PC-9 (cell line): ENCODE measurements at regions of chr2 and their contacts with region 1.

Region 1: DNA sequence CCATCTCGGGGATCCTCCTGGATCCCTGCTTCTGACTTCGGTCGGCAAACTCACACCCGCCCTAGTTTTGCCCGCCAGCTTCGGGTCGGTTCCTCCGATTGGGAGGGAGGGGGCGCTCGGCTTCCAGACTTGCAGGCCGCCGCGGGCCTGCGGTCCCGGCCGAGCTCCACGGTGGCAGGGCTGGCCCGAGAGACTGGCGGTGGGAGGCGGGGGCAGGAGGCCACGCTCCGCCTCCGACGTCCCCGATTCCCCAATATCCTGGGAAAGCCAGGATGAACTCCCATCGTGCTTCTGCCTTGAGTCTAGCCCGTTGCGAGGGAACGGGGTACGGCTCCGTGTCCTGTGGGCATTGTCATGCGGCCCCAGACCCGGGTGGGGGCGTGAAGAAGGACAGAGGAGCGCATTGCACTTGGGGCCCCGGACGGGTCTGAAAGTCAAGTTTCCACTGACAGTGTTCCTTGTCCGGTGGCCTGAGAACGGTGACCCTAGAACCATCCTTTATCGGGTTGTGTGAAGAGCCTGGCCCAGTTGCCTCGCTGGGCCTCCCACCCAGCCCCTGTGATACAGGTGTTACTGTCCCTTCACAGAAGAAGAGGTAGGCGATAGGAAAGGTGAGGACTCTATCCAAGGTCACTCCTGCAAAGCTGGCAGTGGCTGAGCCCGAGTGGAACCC is 2.4 kb upstream of the INHBB start:
- DNase-seq: peak; percentile 80 to 87
- H3K4me3 ChIP-seq: peak overlapping the region; percentile 77; the same call in 1 of the 2 replicates
- H3K27ac ChIP-seq: no peak overlapping the region
- H3K4me1 ChIP-seq: peaks cover 21% of the 10 kb centered on the region
- H3K27me3 ChIP-seq: 0 out of 2 replicates have a peak, but pooled peaks cover 7% of the 10 kb centered on the region
- CTCF ChIP-seq: peak; percentile 96

Region 2: GRCh38 chr2:120323214-120323613 is 20.4 kb before region 1 on chr2:
- CTCF ChIA-PET with region 1: interaction called, 3 read pairs
- POLR2A ChIA-PET with region 1: interaction called, 26 read pairs
- intact Hi-C with region 1: no loop called
- DNase-seq: peak in 1 of 2 experiments; percentile 62
- H3K4me3 ChIP-seq: no peak overlapping the region
- H3K27ac ChIP-seq: no peak overlapping the region
- H3K4me1 ChIP-seq: peaks cover 47% of the 10 kb centered on the region
- H3K27me3 ChIP-seq: peaks cover 14% of the 10 kb centered on the region
- CTCF ChIP-seq: no peak

Region 3: DNA sequence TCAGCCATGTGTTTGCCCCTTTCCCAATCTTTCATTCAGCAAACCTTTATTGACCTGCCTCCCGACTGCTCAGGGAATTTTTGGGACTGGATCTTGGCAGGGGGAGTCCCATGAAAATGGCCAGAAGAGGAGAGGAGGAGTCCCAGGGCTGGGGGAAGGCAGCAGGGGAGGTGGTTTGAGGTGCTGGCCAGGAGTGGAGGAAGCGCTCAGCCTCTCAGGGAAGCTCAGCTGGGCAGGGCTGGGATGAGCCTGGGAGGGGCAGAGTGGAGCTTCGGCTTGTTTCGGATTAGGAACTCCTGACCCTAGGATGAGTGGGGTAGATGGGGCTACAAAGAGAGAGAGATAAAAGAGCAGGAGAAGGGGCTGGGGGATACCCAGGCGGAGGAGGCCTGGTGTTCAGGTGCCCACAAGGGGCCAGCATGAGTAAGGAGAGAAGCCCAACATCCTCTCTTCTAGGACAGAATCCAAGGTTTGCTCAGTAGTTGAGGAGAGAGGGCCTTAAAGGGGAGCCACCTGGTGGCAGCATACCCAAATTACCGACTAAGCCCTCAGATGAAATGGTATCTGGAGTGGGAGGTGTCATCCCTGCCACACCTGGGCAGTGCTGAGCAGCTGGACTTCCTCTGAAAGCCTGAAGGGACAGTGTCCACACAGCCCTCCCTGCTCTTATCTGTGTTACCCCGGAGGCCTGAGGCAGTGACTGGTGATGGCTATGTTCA is 93.5 kb after region 1 on chr2:
- CTCF ChIA-PET with region 1: interaction called, 3 read pairs
- POLR2A ChIA-PET with region 1: no interaction called
- intact Hi-C with region 1: loop called (anchors 1 kb)
- DNase-seq: peak; percentile 56 to 77
- H3K4me3 ChIP-seq: no peak overlapping the region
- H3K27ac ChIP-seq: no peak overlapping the region
- H3K4me1 ChIP-seq: peaks cover 22% of the 10 kb centered on the region
- H3K27me3 ChIP-seq: no peaks in the 10 kb centered on the region
- CTCF ChIP-seq: peak; percentile 84

Region 4: GRCh38 chr2:120520929-120521912 is 177.7 kb after region 1 on chr2:
- CTCF ChIA-PET with region 1: no interaction called
- POLR2A ChIA-PET with region 1: no interaction called
- intact Hi-C with region 1: loop called (anchors 1 kb)
- DNase-seq: peak; percentile 59 to 74
- H3K4me3 ChIP-seq: no peak overlapping the region
- H3K27ac ChIP-seq: no peak overlapping the region
- H3K4me1 ChIP-seq: peaks cover 15% of the 10 kb centered on the region
- H3K27me3 ChIP-seq: no peaks in the 10 kb centered on the region
- CTCF ChIP-seq: peak; percentile 99

Region 5: DNA sequence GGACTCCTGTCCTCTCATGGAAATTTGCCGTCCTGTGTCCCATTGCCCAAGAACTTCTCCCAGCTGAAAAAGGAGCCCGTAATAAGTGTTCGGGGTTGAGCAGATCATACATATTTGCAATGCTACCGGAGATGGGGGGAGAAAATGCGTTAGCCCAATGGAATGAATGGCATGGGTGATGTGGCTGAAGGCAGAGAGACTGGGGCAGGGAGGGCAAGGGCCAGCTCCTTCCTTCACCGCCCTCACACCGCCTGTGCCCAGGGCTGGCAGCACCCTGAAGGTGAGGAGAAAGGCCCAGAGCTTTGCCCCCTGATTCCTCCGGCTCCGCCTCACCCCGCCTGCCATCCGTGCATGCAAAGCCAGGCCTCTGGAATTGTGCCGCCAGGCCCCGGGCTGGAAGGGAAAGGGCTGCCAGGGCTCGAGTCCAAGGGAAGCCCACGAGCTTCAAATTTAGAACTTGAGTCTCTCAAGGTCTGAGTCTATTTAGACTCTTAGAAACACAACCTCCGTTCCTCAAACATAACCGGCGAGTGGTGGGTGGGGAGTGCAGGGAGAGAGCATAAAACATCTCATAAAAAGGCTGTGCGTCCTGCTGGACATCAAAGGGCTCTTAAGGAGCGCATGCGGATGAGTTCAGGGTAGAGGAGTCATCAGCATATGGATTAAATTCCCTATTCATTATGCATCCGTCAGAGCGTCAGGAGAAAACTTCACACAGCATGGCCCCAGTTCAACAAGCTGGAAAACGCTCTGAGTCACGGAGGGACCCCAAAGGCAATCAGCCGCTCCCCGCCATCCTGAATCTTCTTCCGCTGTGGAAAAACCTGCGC is 270.4 kb after region 1 on chr2:
- CTCF ChIA-PET with region 1: no interaction called
- POLR2A ChIA-PET with region 1: interaction called, 12 read pairs
- intact Hi-C with region 1: no loop called
- DNase-seq: peak; percentile 69 to 73
- H3K4me3 ChIP-seq: no peak overlapping the region
- H3K27ac ChIP-seq: peak overlapping the region; percentile 53
- H3K4me1 ChIP-seq: peaks cover 26% of the 10 kb centered on the region
- H3K27me3 ChIP-seq: no peaks in the 10 kb centered on the region
- CTCF ChIP-seq: no peak